A549 (cell line): ENCODE measurements at regions of chr6 and their contacts with region 1.

Region 1: GRCh38 chr6:131519670-131520436 is 53.2 kb upstream of the ARG1 start:
- DNase-seq: peak; percentile 7 to 52
- ATAC-seq: peak; percentile 85 to 92
- H3K4me3 ChIP-seq: no peak overlapping the region
- H3K27ac ChIP-seq: no peak overlapping the region
- H3K4me1 ChIP-seq: no peaks in the 10 kb centered on the region
- CTCF ChIP-seq: peak; percentile 42
- EP300 ChIP-seq: no peak
- POLR2A ChIP-seq: no peak
- RAD21 ChIP-seq: peak; percentile 24 to 31; a peak in 3 of 5 replicates

Region 2: GRCh38 chr6:131532580-131533039 is 12.8 kb after region 1 on chr6:
- CTCF ChIA-PET with region 1: interaction called, 26 read pairs
- POLR2A ChIA-PET with region 1: no interaction called
- DNase-seq: no peak
- ATAC-seq: no peak
- H3K4me3 ChIP-seq: no peak overlapping the region
- H3K27ac ChIP-seq: no peak overlapping the region
- H3K4me1 ChIP-seq: no peaks in the 10 kb centered on the region
- CTCF ChIP-seq: no peak
- EP300 ChIP-seq: no peak
- POLR2A ChIP-seq: no peak
- RAD21 ChIP-seq: no peak

Region 3: GRCh38 chr6:131548441-131548840 is 28.6 kb after region 1 on chr6:
- CTCF ChIA-PET with region 1: no interaction called
- POLR2A ChIA-PET with region 1: no interaction called
- DNase-seq: no peak
- ATAC-seq: no peak
- H3K4me3 ChIP-seq: no peak overlapping the region
- H3K27ac ChIP-seq: no peak overlapping the region
- H3K4me1 ChIP-seq: no peaks in the 10 kb centered on the region
- CTCF ChIP-seq: no peak
- EP300 ChIP-seq: no peak
- POLR2A ChIP-seq: no peak
- RAD21 ChIP-seq: no peak